Adrenal gland (tissue), 19 donors: ENCODE measurements at regions of chr11 and their contacts with region 1.

Region 1: DNA sequence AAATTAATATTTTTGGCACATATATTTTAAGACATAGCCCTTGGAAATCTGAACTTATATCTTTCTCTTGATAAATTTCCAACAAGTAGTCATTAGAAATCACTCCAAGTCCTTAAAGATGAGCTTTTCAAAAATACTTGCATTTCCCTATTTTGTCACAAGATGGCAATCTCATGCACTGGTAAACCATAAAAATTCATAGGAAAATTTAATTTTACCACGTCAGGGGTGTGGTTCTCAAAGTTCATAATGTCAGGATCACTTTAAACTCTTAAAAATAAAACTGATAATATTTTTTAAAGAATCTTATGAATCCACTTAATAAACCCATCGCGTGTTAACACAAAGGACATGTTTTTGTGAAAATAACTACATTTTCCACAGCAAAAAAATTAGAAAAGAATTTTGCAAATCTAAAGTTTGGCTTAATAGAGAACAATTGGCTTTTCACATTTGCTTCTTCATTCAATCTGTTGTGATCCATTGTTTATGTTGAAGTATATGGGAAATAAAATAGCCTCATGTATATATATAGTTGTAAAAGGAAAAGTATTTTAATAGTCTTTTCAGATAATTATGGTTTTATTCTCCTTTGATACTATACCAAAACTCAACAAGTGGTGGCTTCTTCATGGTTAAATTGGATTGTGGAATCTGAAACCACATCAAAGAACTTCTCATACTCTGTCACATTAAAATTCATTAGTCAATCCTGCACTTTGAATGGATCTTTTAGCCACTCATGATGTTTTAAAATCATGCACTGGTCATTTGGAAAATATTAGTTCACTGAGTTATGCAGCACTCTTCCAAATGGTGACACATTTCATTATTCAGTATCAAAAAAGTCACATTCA is 169.1 kb downstream of the CADM1 start:
- DNase-seq: no peak
- H3K4me3 ChIP-seq: no peak overlapping the region
- H3K27ac ChIP-seq: no peak overlapping the region
- H3K4me1 ChIP-seq: no peaks in the 10 kb centered on the region
- H3K27me3 ChIP-seq: no peaks in the 10 kb centered on the region
- CTCF ChIP-seq: peak; percentile 58 to 83 (median 70)
- POLR2A ChIP-seq: no peak

Region 2: DNA sequence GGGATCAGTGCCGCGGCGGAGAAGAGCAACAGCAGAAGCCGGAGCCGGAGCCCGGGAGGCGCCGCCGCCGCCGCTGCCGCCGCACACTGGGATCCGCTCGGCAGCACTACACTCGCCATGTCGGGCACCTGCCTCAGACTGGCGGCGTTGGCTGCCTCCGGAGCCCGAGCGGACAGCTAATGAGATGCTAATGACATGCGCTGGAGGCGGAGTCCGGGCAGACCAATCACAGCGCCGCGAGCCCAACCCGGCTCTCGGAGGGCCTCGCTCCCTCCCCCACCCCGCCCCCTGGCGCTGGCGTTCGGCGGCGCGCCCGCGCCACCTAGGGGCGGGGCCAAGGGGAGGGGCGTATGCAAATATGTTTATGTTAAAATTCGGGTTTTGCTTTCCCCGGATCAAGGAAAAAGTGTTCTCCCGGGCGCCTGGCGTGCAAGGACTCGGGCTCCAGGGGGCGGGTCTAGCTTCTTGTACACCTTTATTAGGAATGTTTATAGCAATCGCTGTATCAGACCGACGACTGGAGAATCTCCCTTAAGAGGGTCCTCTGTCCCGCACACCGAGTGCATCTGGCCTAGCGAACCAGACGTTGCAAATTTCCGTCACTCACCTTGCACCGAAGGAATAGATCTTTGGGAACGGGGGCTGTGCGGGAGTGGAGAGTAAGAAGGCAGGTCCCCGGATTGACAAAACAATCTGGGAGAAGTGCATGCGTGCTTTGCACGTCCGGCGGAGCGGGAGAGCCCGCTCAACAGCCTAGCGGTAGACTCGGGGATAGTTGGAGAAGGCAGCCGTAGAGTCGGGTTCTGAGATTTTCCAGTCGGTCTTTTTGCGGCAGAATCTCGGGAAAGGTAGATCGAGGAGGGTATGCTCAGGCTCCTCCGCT is 169.4 kb after region 1 on chr11 and contains the start of gene CADM1:
- intact Hi-C with region 1: loop called in 1 of 2 experiments (anchors 10 kb)
- DNase-seq: peak; percentile 96 to 99 (median 98)
- H3K4me3 ChIP-seq: peak within 1 kb of the TSS; percentile 51 to 82 (median 64)
- H3K27ac ChIP-seq: peak within 1 kb of the TSS in 4 of 5 donors; percentile 71 to 84 (median 80)
- H3K4me1 ChIP-seq: peaks cover 10 to 15% of the 10 kb centered on the region in 2 donors
- H3K27me3 ChIP-seq: no peaks in the 10 kb centered on the region
- CTCF ChIP-seq: peak; percentile 32 to 83 (median 73)
- POLR2A ChIP-seq: peak; percentile 82 to 92
- total RNA-seq, gene CADM1: 24.8 to 256 (median 40.3) TPM

Region 3: DNA sequence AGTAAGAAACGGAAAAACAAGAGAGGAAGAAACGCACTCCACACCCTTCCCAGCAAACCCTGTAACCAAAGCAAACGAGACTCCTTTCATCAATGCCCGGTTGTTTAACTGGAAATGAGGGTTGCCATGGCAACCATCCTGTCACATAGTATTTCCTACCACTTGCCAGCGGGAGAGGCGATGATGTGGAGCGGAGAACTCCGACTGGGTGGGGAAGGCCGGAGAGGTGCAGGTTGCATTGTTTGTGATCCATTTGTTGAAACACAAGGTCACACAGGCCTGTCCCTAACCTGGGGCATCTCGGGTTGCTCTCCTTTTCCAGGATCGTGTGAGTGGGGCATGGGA is 827.7 kb after region 1 on chr11:
- intact Hi-C with region 1: loop called in 1 of 2 experiments (anchors 10 kb)
- DNase-seq: peak in 1 of 7 donors; percentile 45
- H3K4me3 ChIP-seq: no peak overlapping the region
- H3K27ac ChIP-seq: no peak overlapping the region
- H3K4me1 ChIP-seq: no peaks in the 10 kb centered on the region
- H3K27me3 ChIP-seq: no peaks in the 10 kb centered on the region
- CTCF ChIP-seq: no peak
- POLR2A ChIP-seq: no peak